Transverse colon (tissue), 4 donors: ENCODE measurements at regions of chr1 and their contacts with region 1.

Region 1: GRCh38 chr1:182629499-182630096 is 25.4 kb upstream of the RGS16 start:
- DNase-seq: no peak
- H3K4me3 ChIP-seq: no peak overlapping the region
- H3K27ac ChIP-seq: no peak overlapping the region
- H3K4me1 ChIP-seq: peaks cover 0 to 8% (median 2%) of the 10 kb centered on the region in 4 donors
- H3K27me3 ChIP-seq: no peaks in the 10 kb centered on the region
- CTCF ChIP-seq: no peak
- EP300 ChIP-seq: no peak
- POLR2A ChIP-seq: no peak

Region 2: GRCh38 chr1:181661569-181661968 is 968.0 kb before region 1 on chr1:
- in situ Hi-C with region 1: no loop called
- intact Hi-C with region 1: loop called (anchors 5 kb)
- DNase-seq: no peak
- H3K4me3 ChIP-seq: no peak overlapping the region
- H3K27ac ChIP-seq: no peak overlapping the region
- H3K4me1 ChIP-seq: peaks cover 0 to 4% (median 0%) of the 10 kb centered on the region in 4 donors
- H3K27me3 ChIP-seq: no peaks in the 10 kb centered on the region
- CTCF ChIP-seq: no peak
- EP300 ChIP-seq: no peak
- POLR2A ChIP-seq: no peak

Region 3: GRCh38 chr1:182235952-182236650 is 393.5 kb before region 1 on chr1:
- in situ Hi-C with region 1: no loop called
- intact Hi-C with region 1: no loop called
- DNase-seq: peak; percentile 60
- H3K4me3 ChIP-seq: no peak overlapping the region
- H3K27ac ChIP-seq: peak overlapping the region; percentile 63 to 77 (median 68)
- H3K4me1 ChIP-seq: peaks cover 5 to 26% (median 12%) of the 10 kb centered on the region in 4 donors
- H3K27me3 ChIP-seq: no peaks in the 10 kb centered on the region
- CTCF ChIP-seq: no peak
- EP300 ChIP-seq: peak; percentile 4
- POLR2A ChIP-seq: no peak

Region 4: DNA sequence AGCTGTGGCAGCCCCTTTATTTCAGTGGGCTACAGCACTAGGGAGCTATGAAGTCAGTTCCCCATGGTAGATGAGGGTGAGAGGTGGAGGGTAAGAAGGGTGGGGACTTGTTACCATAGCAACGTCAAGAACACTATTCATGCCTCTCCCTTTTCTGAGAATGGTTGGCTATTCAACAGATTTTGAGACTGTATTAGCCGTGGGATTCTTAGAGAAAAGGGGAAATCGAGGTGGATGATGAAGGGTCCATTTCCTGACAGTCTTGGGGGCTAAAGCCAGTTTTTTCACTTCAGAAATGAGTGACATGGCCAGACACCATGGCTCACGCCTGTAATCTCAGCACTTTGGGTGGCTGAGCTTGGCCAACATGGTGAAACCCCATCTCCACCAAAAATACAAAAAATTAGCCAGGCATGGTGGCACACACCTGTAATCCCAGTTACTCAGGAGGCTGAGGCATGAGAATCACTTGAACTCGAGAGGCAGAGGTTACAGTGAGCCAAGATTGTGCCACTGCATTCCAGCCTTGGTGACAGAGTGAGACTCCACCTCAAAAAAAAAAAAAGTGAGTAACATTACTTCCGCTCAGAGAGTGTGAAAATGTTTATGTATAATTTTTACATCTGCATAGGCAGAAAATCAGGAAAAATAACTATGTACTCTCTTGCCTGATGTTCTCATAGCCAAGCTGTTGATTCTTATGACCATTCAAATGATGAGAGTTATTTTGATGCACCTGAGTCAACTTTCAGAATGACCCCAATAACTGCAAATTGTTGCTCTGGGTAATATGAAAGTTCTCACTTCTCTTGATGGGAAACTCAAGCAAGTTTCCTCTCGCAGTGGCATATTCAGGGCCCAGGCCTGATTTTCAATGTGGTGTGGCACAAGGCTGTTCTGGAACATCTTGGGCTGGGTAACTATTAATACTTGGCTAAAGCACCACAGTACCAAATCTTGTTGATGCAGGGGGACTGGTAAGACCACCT is 202.9 kb before region 1 on chr1:
- in situ Hi-C with region 1: no loop called
- intact Hi-C with region 1: no loop called
- DNase-seq: no peak
- H3K4me3 ChIP-seq: no peak overlapping the region
- H3K27ac ChIP-seq: no peak overlapping the region
- H3K4me1 ChIP-seq: no peaks in the 10 kb centered on the region
- H3K27me3 ChIP-seq: no peaks in the 10 kb centered on the region
- CTCF ChIP-seq: no peak
- EP300 ChIP-seq: no peak
- POLR2A ChIP-seq: no peak